CD4-positive, alpha-beta memory T cell (primary cell): ENCODE measurements at regions of chr2 and their contacts with region 1.

Region 1: GRCh38 chr2:229835596-229836283 is 86.1 kb downstream of the TRIP12 start:
- DNase-seq: peak; percentile 51 to 78 (median 68)
- H3K4me3 ChIP-seq: peak overlapping the region in 1 of 2 donors; percentile 25
- H3K4me3 Mint-ChIP-seq: peak overlapping the region; percentile 11 to 82 (median 44)
- H3K27ac ChIP-seq: no peak overlapping the region
- H3K27ac Mint-ChIP-seq: peak overlapping the region; percentile 36 to 96 (median 93)
- H3K4me1 ChIP-seq: peaks cover 71% of the 10 kb centered on the region
- H3K4me1 Mint-ChIP-seq: peaks cover 45 to 76% (median 58%) of the 10 kb centered on the region in 4 donors
- H3K27me3 ChIP-seq: no peaks in the 10 kb centered on the region
- H3K27me3 Mint-ChIP-seq: no peaks in the 10 kb centered on the region

Region 2: GRCh38 chr2:229852565-229852964 is 16.8 kb after region 1 on chr2:
- CTCF ChIA-PET with region 1: interaction called, 4 read pairs
- POLR2A ChIA-PET with region 1: interaction called, 41 read pairs
- intact Hi-C with region 1: loop called (anchors 2 kb)
- DNase-seq: peak; percentile 45 to 57 (median 47)
- H3K4me3 ChIP-seq: no peak overlapping the region
- H3K4me3 Mint-ChIP-seq: peak overlapping the region in 6 of 8 donors; percentile 9 to 62 (median 42)
- H3K27ac ChIP-seq: peak overlapping the region; percentile 23
- H3K27ac Mint-ChIP-seq: peak overlapping the region; percentile 57 to 88 (median 78)
- H3K4me1 ChIP-seq: peaks cover 62% of the 10 kb centered on the region
- H3K4me1 Mint-ChIP-seq: peaks cover 47 to 77% (median 61%) of the 10 kb centered on the region in 4 donors
- H3K27me3 ChIP-seq: no peaks in the 10 kb centered on the region
- H3K27me3 Mint-ChIP-seq: no peaks in the 10 kb centered on the region

Region 3: DNA sequence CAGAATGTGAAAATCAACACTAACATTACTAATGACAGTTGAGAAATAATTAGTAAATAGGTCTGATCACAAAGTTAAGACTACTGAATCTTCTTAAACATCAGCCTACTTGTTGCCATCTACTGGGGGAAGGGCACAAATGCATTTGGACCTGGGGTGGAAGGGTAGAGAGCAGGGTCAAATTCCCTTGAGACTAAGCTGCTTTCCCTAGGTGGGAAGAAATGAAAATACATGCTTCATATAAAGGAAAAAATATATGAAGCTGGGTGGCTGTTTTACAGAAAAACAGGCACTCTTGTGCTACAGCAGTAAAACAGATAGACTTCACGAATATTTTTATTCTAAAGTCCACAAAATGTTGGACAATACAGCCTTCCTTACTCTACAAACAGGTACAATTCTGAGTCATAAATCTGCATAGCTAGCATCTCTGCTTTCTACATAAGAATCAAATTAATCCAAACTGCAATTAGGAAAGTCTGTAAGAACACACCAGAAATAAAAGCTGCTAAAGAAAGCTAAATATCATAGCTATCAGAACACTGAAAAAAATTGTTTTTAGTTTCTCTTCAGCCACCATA is 75.2 kb after region 1 on chr2:
- CTCF ChIA-PET with region 1: interaction called, 21 read pairs
- POLR2A ChIA-PET with region 1: no interaction called
- intact Hi-C with region 1: no loop called
- DNase-seq: peak in 4 of 5 donors; percentile 22 to 35 (median 30)
- H3K4me3 ChIP-seq: no peak overlapping the region
- H3K4me3 Mint-ChIP-seq: peak overlapping the region in 4 of 8 donors; percentile 17 to 43 (median 30)
- H3K27ac ChIP-seq: peak overlapping the region; percentile 2
- H3K27ac Mint-ChIP-seq: peak overlapping the region in 6 of 7 donors; percentile 28 to 78 (median 48)
- H3K4me1 ChIP-seq: peaks cover 65% of the 10 kb centered on the region
- H3K4me1 Mint-ChIP-seq: peaks cover 32 to 60% (median 43%) of the 10 kb centered on the region in 4 donors
- H3K27me3 ChIP-seq: no peaks in the 10 kb centered on the region
- H3K27me3 Mint-ChIP-seq: no peaks in the 10 kb centered on the region